Left ventricle myocardium superior (tissue), 1 donor: ENCODE measurements at regions of chr9 and their contacts with region 1.

Region 1: DNA sequence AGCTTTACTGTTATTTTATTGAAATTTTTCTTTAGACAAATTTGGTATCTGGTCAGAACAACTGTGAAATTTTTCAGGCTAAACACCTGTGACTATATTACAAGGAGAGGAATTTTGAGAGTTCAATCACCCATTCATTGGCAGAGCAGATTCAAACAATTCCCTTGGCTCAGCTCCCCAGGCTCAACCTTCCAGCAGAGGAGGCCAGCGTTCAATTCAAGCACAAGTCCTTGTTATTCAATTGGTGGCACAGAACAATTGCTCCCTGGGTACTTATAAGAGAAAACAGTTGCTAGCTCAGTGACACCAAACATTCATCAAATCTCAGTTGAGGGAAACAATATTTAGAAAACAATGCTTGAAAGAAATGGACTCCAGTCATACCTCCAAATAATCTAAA is 83.3 kb downstream of the SUSD1 start:
- DNase-seq: no peak
- ATAC-seq: no peak

Region 2: GRCh38 chr9:111957856-111958652 is 133.8 kb before region 1 on chr9:
- intact Hi-C with region 1: no loop called
- DNase-seq: no peak
- ATAC-seq: peak; percentile 65

Region 3: GRCh38 chr9:112361601-112362000 is 269.8 kb after region 1 on chr9:
- intact Hi-C with region 1: loop called (anchors 5 kb)
- DNase-seq: no peak
- ATAC-seq: peak; percentile 38

Region 4: GRCh38 chr9:112421771-112422222 is 330.0 kb after region 1 on chr9:
- intact Hi-C with region 1: no loop called
- DNase-seq: no peak
- ATAC-seq: no peak